Activated CD4-positive, alpha-beta T cell treated with anti-CD3 and anti-CD28 coated beads for 36 hours (primary cell): ENCODE measurements at regions of chr11 and their contacts with region 1.

Region 1: DNA sequence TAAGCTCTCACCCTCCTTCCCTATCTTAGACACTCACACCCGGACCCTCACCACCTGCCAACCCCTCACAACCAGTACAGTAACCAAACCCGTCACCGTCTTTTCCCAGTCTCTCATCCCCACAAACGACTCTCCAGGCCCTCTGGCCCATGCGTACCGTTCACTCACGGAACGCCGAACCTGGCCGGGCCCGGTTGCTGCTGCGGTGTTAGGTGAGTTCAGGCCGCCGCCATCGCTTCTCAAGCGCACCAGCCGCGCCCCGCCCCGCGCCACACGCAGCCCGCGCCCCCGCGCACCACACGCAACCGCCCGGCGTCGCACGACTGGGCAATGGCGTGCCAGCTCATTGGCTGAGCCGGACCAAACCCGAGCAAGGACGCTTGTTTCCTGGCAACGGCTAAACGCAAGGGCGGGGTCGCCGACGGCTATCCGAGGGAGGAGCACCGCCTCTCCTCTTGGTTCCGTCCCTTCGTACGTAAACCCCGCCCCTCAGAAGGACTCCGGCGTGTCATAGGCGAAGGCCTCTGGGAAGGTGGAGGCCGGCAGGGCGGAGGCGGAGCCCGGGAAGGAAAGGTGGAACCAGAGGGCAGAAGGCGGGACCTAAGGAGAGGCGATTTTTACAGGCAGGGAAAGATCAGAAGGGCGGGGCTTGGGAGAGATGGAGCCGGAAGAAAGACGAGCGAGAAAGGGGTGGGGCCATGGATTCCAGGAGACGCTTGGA is at the start of gene FHIP1B:
- DNase-seq: peak; percentile 100
- ATAC-seq: peak; percentile 95
- H3K4me3 Mint-ChIP-seq: peak within 1 kb of the TSS; percentile 95
- H3K27ac Mint-ChIP-seq: peak within 1 kb of the TSS; percentile 93
- H3K4me1 Mint-ChIP-seq: peaks cover 39% of the 10 kb centered on the region
- H3K27me3 Mint-ChIP-seq: no peaks in the 10 kb centered on the region
- total RNA-seq, gene FHIP1B: 17.0 to 17.1 TPM

Region 2: GRCh38 chr11:6251120-6251733 is 16.7 kb after region 1 on chr11:
- CTCF ChIA-PET with region 1: interaction called, 14 read pairs
- POLR2A ChIA-PET with region 1: no interaction called
- intact Hi-C with region 1: no loop called
- DNase-seq: peak; percentile 77
- ATAC-seq: peak; percentile 86
- H3K4me3 Mint-ChIP-seq: no peak overlapping the region
- H3K27ac Mint-ChIP-seq: no peak overlapping the region
- H3K4me1 Mint-ChIP-seq: no peaks in the 10 kb centered on the region
- H3K27me3 Mint-ChIP-seq: no peaks in the 10 kb centered on the region

Region 3: GRCh38 chr11:6362873-6363678 is 128.5 kb after region 1 on chr11:
- CTCF ChIA-PET with region 1: interaction called, 10 read pairs
- POLR2A ChIA-PET with region 1: no interaction called
- intact Hi-C with region 1: no loop called
- DNase-seq: peak; percentile 86
- ATAC-seq: peak; percentile 97
- H3K4me3 Mint-ChIP-seq: no peak overlapping the region
- H3K27ac Mint-ChIP-seq: no peak overlapping the region
- H3K4me1 Mint-ChIP-seq: no peaks in the 10 kb centered on the region
- H3K27me3 Mint-ChIP-seq: no peaks in the 10 kb centered on the region

Region 4: DNA sequence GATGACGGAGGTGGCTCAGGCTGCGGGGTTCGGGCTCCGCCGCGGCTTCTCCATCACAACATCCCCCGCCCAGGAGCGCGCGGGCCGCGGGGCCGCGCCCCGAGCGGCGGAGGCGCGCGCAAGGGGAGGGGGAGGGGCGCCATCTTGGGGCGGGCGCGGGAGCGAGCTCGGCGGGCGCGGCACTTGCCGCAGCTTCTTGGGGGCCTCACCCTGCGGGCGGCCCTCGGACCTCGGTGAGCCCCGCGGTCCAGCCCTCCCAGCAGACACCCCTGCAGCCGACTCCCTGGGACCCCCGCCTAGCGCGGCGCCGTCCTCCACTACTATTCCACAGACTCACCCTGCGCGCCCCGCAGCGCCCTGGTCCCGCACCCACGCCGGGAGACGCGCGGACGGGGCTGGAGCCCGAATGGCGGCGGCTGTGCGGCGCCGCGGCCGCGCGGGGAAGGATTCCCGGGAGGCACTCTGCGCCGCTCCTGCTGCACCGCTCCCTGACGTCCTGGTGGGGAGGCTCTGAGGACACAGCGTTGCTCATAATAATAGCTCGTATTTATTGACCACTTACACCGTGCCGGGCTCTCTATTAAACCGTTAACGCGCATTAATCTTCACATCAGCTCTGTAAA is 184.6 kb after region 1 on chr11 and contains the start of gene APBB1:
- CTCF ChIA-PET with region 1: no interaction called
- POLR2A ChIA-PET with region 1: no interaction called
- intact Hi-C with region 1: loop called (anchors 1 kb)
- DNase-seq: peak; percentile 86
- ATAC-seq: peak; percentile 54
- H3K4me3 Mint-ChIP-seq: peak within 1 kb of the TSS; percentile 72
- H3K27ac Mint-ChIP-seq: peak within 1 kb of the TSS; percentile 73
- H3K4me1 Mint-ChIP-seq: peaks cover 7% of the 10 kb centered on the region
- H3K27me3 Mint-ChIP-seq: peaks cover 6% of the 10 kb centered on the region
- total RNA-seq, gene APBB1: 43.2 to 49.8 TPM

Region 5: DNA sequence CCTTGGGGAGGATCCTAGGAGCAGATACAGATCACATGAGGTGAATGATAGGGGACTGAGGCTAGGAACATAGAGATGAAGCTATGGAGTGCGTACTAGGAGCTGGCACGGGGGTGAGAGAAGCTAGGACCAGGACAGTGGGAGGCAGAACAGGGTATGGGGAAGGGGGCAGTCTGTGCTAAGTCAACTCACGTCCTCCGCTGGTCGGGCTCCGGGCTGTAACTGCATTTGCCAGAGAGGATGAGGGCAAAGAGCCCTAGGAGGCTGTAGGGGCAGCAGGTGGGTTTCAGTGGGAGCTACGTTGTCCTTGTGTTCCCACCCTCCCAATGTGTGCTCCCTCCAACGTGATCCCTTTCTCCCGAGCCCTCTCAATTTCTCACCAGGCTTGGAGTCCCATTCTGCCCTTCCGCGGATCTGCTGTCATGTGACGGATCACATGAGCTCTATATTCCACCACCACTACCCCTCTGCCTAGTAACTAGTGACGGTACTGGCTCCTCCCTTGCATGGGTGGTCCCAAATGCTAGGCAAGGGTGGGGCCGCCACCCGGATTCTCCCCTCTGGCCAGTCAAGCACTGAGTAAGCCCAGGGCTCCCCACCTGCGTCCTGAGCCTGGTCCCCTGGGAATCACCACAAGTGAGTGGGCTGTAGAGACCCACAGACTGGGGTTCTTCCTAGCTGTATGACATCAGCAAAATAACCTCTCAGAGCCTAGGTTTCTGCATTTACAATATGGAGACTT is 384.6 kb after region 1 on chr11 and contains the start of gene TPP1:
- CTCF ChIA-PET with region 1: no interaction called
- POLR2A ChIA-PET with region 1: no interaction called
- intact Hi-C with region 1: loop called (anchors 1 kb)
- DNase-seq: peak; percentile 91
- ATAC-seq: peak; percentile 93
- H3K4me3 Mint-ChIP-seq: no peak within 1 kb of the TSS
- H3K27ac Mint-ChIP-seq: no peak within 1 kb of the TSS
- H3K4me1 Mint-ChIP-seq: peaks cover 8% of the 10 kb centered on the region
- H3K27me3 Mint-ChIP-seq: no peaks in the 10 kb centered on the region
- total RNA-seq, gene TPP1: 38.1 to 47.9 TPM

Region 6: DNA sequence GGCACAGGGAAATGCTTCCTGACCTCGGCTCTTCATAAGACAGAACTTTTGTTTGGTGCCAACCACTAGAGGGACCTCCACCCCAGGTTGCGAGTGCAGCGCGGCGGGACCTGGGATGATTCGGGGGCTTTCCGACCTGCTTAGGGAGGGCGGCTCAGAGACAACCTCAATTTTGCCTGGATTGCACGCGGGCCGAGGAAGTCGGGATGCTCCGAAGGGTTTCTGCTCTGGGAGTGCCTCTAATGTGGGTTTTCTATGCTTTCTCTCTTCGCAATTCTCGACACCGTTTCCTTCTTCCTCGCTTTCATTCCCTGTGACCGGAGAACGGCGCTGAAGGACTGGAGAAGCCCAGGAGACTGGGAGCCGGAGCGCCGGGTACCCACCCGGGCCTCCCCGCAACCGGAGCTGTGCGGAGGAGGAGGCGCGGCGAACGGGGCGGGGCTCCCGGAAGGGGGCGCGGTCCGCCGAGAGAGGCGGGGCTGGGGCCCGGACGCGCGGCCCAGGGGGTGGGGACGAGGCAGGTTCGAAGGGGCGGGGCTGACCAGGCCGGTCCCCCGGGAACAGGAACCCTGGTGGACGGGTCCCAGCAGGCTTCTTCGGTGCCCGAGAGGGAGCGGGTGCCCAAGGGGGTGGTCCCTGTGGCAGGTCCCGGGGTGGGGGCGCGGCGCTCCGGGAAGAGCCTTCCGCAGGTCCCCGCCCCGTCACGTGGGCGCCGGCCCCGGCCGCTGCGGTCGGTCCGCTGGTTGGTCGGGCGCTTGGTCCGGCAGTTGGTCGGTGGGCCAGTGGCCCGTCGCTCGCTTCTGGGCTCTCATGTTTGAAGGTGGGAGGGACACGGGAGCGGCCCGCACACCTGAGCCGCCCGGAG is 1278.9 kb after region 1 on chr11 and contains the start of gene PPFIBP2:
- CTCF ChIA-PET with region 1: no interaction called
- POLR2A ChIA-PET with region 1: no interaction called
- intact Hi-C with region 1: loop called in 1 of 2 experiments (anchors 5 kb)
- DNase-seq: peak; percentile 89
- ATAC-seq: peak; percentile 89
- H3K4me3 Mint-ChIP-seq: peak within 1 kb of the TSS; percentile 86
- H3K27ac Mint-ChIP-seq: peak within 1 kb of the TSS; percentile 93
- H3K4me1 Mint-ChIP-seq: peaks cover 45% of the 10 kb centered on the region
- H3K27me3 Mint-ChIP-seq: peaks cover 2% of the 10 kb centered on the region
- total RNA-seq, gene PPFIBP2: 7.9 to 13.2 TPM